Psoas muscle (tissue), 8 donors: ENCODE measurements at regions of chrX and their contacts with region 1.

Region 1: DNA sequence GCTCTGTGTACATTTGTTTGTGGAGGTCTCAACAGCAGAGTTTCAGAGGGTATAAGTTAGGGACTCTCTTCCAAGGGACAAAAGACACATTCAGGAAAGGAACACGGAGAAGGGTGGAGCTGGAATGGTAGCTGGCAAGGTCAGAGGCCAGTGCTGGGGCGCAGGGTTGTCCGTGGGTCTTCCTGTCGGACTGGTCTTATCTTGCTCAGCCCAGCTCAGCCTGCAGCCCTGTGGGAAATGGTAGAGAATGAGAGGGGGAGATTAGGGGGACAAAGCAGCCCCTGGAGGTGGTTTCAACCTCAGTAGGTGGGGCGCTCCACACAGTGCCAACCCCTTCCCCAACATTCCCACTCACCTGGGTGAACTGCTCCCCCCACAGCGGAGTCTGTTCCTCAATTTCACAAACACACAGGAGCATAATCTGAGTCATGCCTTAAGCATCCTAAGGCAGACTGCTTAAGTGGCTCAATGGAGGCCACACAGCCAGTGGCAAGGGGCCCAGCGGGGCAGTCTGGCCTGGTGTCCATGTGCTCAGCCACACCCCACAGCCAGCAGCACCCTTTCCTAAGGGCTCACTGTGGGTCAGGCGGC is 6.9 kb upstream of the HDAC6 start:
- DNase-seq: no peak
- ATAC-seq: no peak
- H3K4me3 ChIP-seq: no peak overlapping the region
- H3K27ac ChIP-seq: no peak overlapping the region
- H3K4me1 ChIP-seq: no peaks in the 10 kb centered on the region
- H3K27me3 ChIP-seq: peaks cover 0 to 10% (median 0%) of the 10 kb centered on the region in 3 donors
- CTCF ChIP-seq: no peak

Region 2: DNA sequence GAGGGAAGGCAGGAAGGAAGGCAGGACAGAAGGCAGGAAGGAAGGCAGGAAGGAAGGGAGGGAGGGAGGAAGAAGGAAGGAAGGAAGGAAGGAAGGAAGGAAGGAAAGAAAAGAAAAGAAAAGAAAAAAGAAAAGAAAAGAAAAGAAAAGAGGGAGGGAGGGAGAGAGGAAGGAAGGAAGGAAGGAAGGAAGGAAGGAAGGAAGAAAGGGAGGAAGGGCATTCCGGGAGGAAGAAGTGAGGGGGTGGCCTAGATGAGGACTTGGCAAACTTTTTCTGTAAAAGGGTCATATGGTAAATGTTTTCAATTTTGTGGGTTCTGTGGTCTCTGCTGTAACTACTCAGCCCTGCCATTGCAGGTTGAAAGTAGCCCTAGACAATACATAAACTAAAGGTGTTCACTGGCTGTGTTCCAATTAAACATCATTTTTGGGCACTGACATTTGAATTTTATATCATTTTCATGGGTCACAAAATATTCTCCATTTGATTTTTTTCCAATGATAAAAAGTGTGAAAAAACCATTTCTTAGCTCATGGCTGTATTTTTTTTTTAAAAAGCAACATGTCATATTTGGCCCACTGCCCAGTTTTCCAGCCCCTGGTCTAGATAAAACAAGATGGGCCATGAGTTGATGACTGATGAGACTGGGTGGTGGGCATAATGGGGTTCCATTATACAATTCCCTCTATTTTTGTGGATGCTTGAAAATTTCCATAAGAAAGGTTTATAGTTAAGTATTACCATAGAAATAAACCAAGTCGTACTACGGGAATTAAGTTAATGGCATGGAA is 726.7 kb before region 1 on chrX:
- intact Hi-C with region 1: no loop called
- DNase-seq: no peak
- ATAC-seq: no peak
- H3K4me3 ChIP-seq: no peak overlapping the region
- H3K27ac ChIP-seq: no peak overlapping the region
- H3K4me1 ChIP-seq: no peaks in the 10 kb centered on the region
- H3K27me3 ChIP-seq: no peaks in the 10 kb centered on the region
- CTCF ChIP-seq: no peak

Region 3: GRCh38 chrX:48737213-48737938 is 57.6 kb before region 1 on chrX:
- intact Hi-C with region 1: loop called in 1 of 2 experiments (anchors 5 kb)
- DNase-seq: peak; percentile 87 to 96
- ATAC-seq: peak; percentile 99 to 100 (median 100)
- H3K4me3 ChIP-seq: peak overlapping the region; percentile 69
- H3K27ac ChIP-seq: peak overlapping the region; percentile 83
- H3K4me1 ChIP-seq: no peaks in the 10 kb centered on the region
- H3K27me3 ChIP-seq: no peaks in the 10 kb centered on the region
- CTCF ChIP-seq: no peak

Region 4: DNA sequence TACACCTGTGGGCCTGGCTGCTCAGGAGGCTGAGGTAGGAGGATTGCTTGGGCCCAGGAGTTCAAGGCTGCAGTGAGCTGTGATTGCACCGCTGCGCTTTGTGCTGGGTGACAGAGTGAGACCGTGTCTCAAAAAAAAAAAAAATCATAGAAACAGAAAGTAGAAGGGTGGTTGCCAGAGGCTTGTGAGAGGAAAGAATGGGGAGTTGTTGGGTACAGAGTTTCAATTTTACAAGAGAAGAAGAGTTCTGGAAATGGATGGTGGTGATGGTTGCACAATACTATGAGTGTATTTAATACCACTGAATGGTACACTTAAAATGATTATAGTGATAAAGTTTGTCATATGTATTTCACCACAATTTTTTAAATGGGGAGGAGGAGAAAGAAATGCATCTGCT is 43.7 kb before region 1 on chrX:
- intact Hi-C with region 1: no loop called
- DNase-seq: no peak
- ATAC-seq: no peak
- H3K4me3 ChIP-seq: no peak overlapping the region
- H3K27ac ChIP-seq: no peak overlapping the region
- H3K4me1 ChIP-seq: no peaks in the 10 kb centered on the region
- H3K27me3 ChIP-seq: peaks cover 0 to 13% (median 0%) of the 10 kb centered on the region in 3 donors
- CTCF ChIP-seq: no peak

Region 5: DNA sequence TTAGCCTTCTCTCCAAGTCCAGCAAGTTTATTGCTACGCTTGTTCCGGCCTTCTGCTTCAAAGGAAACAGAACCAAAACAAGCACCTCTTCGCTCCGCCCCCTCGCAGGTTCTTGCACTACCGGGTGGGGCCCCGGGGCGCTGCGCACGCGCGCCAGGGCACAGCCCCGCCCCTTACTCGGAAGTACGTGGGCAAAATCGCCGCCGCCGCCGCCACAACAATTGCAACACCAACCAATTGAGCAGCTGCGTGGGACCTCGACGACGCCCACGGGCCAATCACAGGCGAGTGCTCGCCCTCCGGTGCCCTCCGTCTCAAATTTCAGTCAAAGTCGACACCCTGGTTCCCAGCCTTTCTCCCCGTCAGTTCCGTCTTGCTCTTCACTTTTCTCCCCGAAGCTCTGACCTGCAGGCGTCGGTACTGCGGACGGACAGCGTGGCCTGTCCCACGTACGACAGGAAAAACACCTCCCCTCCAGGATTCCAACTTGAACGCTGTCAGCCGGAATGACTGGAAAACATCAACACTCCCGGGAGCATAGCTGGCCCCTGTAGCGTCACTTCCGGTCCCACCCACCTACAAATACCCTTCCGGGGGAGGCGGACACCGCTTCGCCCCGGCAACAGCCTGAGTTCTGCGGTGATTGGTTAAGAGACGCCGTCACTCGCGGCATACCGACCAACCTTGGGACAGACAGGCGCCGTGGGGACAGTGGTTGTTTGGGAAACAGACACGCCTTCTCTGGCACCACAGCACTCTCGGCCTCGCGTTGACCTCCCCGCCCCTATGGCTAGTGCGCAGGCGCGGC is 163.0 kb after region 1 on chrX:
- intact Hi-C with region 1: no loop called
- DNase-seq: peak; percentile 95 to 98
- ATAC-seq: peak; percentile 91 to 94 (median 93)
- H3K4me3 ChIP-seq: peak overlapping the region; percentile 76
- H3K27ac ChIP-seq: peak overlapping the region; percentile 93
- H3K4me1 ChIP-seq: peaks cover 6% of the 10 kb centered on the region
- H3K27me3 ChIP-seq: no peaks in the 10 kb centered on the region
- CTCF ChIP-seq: no peak